OCI-LY7 (cell line): ENCODE measurements at regions of chr9 and their contacts with region 1.

Region 1: GRCh38 chr9:5988265-5988664 is 27.2 kb downstream of the RANBP6 start:
- DNase-seq: no peak
- H3K4me3 ChIP-seq: no peak overlapping the region
- H3K27ac ChIP-seq: no peak overlapping the region
- H3K4me1 ChIP-seq: no peaks in the 10 kb centered on the region
- CTCF ChIP-seq: no peak

Region 2: GRCh38 chr9:5879419-5880181 is 108.7 kb before region 1 on chr9:
- CTCF ChIA-PET with region 1: no interaction called
- POLR2A ChIA-PET with region 1: no interaction called
- intact Hi-C with region 1: no loop called
- DNase-seq: no peak
- H3K4me3 ChIP-seq: no peak overlapping the region
- H3K27ac ChIP-seq: no peak overlapping the region
- H3K4me1 ChIP-seq: no peaks in the 10 kb centered on the region
- CTCF ChIP-seq: no peak

Region 3: DNA sequence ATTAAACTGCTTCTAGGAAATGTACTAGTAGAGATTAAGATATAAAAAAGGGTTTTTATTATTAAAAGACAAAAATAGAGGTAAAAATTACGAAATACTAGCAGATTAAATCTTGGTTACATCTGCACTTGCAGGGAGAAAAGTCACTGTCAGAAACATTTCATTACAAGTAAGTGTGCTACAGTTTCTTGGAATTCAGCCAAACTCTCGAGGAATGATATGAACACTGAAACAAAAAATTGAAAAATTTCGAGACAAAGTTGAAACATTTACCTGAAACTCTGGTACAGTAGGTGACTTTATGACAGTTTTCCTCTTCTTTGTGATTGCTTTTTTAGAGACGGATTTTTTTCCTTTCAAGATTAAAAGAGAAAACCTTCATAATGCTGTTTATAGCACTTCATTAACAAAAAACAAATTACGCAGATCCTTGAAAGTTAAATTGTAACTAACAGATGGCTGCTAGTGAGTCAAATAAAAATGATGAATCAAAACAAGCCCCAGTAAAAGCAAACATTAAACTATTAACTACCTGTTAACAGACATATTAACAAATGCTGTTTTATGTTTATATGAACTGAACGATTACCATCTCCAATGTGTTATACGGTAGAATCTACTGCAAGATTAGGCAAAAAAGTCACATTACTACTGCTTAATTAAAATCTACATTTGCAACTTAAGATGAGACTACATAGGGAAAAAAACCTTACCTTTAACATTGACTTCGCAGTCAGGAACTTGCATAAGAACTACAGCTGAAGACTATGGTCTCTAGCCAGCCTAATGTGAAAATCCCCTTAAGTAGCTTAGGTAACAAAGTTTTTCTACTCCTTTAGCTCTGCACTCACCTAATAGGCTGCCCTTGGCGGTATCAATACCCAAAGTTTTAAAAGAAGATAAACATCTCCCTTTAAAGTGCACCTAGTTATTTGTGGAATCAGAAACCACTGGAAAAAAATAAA is 34.2 kb before region 1 on chr9:
- CTCF ChIA-PET with region 1: no interaction called
- POLR2A ChIA-PET with region 1: interaction called, 11 read pairs
- intact Hi-C with region 1: no loop called
- DNase-seq: no peak
- H3K4me3 ChIP-seq: no peak overlapping the region
- H3K27ac ChIP-seq: no peak overlapping the region
- H3K4me1 ChIP-seq: peaks cover 13% of the 10 kb centered on the region
- CTCF ChIP-seq: no peak